Motor neuron (in vitro differentiated cells): ENCODE measurements at regions of chr5 and their contacts with region 1.

Region 1: DNA sequence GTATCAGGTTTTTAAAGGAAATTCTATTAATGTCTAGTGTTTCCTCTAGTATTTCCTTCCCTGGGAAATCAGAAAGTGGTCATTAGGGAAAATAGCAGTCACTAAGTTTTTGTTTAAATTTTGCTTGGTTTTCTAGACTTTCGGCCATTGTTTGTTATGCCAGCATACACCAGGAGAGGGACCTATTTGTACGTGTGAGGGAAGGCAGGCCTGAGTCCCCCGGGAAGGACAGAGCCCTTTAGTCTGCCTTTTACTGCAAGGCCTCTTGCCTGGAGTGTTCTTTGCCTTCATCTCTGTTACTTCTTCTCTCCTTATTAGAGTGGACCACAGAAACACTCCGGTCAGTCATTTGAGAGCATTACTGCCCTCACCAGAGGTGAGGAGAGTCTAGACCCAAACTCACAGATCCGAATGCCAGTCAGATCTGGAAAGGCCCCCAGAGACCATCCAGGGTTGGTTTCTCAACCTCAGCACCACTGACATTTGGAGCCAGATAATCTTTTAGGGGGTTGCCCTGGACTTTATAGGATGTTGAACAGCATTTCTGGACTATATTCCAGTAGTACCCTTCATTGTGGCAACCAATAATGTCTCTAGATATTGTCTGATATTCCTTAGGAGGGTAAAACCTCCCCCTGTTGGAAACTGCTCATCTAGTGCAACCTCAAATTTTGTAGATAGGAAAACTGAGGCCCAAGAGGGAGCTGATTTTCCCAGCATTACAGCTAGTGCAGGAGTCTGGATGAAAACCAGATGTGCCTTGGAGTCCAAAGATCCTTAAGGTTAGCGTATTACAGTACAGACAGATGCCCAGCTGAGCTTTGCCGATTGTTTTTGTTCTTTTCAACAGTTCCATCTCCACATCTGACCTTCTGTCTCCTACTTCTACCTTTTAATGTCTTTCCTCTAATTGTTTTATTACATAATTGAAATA is 93.0 kb upstream of the NIPAL4 start:
- ATAC-seq: peak in 5 of 8 experiments; percentile 27 to 67 (median 63)
- H3K4me3 ChIP-seq: no peak overlapping the region
- H3K27ac ChIP-seq: no peak overlapping the region
- H3K4me1 ChIP-seq: peaks cover 14 to 18% of the 10 kb centered on the region in 2 donors

Region 2: GRCh38 chr5:157464519-157465171 is 97.6 kb after region 1 on chr5:
- in situ Hi-C with region 1: loop called in 1 of 9 experiments (anchors 25 kb)
- ATAC-seq: peak; percentile 38 to 86 (median 56)
- H3K4me3 ChIP-seq: no peak overlapping the region
- H3K27ac ChIP-seq: peak overlapping the region in 1 of 2 donors; percentile 4
- H3K4me1 ChIP-seq: peaks cover 0 to 19% of the 10 kb centered on the region in 2 donors

Region 3: DNA sequence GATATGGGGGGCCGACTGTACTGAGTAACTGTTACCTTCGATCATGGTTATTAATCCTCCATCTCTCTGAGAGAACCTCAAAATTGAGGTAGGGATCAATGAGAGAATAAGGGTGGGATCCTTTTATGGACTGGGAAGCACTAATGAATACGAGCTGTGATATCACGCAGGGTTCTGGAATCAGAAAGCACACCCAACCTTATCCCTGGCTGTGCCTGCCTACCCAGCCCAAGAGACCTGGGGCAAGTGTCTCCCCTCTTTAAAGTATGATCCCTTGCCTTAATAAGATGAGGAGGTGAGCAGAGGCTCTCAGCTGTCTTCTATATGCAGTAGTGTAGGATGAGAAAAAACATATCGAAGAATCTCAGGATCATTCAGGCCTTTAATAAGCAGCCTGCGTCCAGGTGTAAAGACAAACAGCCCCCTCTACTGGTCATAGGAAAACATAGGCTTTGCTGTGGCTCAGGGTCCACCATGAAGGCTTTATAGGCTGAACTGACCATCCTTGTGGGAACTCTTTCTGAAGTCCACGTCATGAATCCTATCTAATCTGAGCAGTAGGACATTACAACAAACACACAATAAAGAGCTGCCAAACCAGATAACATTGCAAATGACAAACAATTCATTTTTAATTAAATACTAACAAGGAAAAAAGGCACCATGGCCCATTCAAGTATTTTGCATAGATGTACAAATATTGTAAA is 109.8 kb after region 1 on chr5:
- in situ Hi-C with region 1: loop called in 2 of 9 experiments (anchors 10 to 25 kb)
- ATAC-seq: peak; percentile 79 to 98 (median 89)
- H3K4me3 ChIP-seq: no peak overlapping the region
- H3K27ac ChIP-seq: no peak overlapping the region
- H3K4me1 ChIP-seq: no peaks in the 10 kb centered on the region

Region 4: DNA sequence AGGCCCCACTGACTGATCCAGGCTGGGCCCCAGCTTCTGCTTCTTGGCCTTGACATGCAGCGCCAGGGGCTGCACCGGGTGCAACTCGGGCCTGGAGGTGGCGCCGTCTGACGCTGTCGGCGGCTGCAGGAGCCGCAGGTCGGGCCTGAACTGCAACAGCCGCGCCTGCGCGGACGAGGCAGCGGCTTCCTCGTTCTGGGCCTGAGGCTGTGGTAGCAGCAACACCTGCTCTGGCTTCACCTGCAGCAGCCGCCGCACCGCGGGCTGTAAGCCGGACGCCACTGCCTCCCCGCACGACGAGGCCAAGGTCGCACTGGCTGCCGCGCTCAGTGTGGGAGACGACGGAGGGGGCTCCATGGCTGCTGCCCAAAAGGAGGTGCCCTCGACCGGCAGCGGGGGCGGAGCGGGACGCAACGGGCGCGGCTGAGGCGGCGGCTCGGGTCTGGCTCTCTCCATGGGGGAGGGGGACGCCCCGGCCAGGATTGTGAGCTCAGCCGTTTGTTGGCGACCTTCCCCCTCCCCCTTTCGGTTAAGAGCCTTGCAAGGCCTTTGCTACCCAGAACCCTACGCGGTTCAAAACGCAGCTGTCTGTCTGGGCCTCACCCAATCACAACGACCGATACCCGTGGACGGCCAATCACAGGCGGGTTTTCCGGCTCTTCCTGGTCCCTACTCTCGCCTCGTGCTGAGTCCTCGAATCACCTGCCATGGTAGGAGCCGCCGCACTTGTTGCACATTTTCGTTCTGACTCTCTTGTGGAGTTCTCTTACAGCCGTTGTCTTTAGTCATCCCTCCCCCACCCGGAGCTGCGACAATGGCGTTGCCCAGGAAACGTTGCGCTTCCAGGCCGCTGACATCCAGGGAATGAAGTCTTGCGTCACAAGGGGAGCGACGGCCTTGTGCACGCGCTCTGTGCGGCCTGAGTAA is 284.9 kb after region 1 on chr5 and contains the start of gene SOX30:
- in situ Hi-C with region 1: no loop called
- ATAC-seq: peak in 3 of 8 experiments; percentile 75 to 93 (median 92)
- H3K4me3 ChIP-seq: no peak within 1 kb of the TSS
- H3K27ac ChIP-seq: no peak within 1 kb of the TSS
- H3K4me1 ChIP-seq: no peaks in the 10 kb centered on the region
- total RNA-seq, gene SOX30: 0.09 to 0.33 (median 0.21) TPM in 6 of 8 experiments, not detected in the others